MCF 10A (cell line): ENCODE measurements at regions of chr14 and their contacts with region 1.

Region 1: DNA sequence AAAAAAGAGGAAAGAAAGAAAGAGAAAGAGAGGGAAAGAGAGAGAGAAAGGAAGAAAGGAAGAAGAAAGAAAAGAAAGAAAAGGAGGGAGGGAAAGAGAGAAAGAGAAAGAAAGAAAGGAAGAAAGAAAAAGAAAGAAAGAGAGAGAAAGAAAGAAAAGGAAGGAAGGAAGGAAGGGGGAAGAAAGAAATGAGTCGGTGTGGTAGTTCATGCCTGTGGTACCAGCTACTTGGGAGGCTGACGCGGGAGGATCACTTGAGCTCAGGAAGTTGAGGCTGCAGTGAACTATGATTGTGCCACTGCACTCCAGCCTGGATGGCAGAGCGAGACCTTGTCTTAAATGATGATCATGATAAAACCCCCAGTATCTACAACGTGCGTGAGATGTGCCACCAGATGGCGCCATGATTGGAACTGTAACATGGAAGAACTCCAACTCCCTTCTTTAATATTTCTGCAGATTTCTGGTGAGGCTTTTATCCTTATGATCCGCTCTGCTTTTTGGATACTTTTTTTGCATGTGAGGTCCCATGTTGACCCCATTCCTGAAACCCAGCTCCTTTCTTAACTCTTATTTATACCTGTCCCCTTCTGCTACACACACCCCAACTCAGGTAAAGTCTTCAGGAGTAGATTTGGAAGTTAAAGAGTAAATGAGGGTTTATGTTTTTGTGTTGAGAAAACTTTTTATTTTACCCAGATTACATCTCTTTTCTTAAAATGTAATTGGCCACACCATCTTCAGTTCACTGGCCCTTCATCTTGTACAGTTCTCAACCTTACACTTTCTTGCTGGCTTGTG is 25.6 kb downstream of the RNASE10 start:
- DNase-seq: peak; percentile 80
- H3K4me3 Mint-ChIP-seq: no peak overlapping the region
- H3K27ac Mint-ChIP-seq: no peak overlapping the region
- H3K4me1 Mint-ChIP-seq: no peaks in the 10 kb centered on the region
- H3K27me3 Mint-ChIP-seq: peaks cover 28% of the 10 kb centered on the region
- CTCF ChIP-seq: peak; percentile 44

Region 2: DNA sequence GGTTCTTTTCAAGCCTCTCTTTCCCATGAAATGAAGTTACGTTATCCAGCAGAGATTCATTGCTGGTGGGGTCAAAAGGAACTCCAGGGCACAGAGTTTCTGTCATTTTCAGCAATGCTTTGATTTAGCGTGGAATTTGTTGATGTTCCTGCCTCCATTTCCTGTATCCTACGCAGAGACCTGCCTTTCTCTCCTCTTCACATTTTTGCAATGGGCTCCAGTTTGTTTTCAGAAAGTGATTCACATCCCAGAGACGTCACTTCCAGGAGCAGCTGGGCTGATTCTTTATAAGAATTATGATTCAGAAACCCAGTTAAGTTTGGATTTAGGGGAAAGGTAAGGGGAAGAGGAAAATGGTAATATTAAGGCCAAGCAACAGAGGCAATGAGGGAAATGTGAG is 14.1 kb before region 1 on chr14:
- CTCF ChIA-PET with region 1: interaction called, 21 read pairs
- POLR2A ChIA-PET with region 1: no interaction called
- intact Hi-C with region 1: no loop called
- DNase-seq: peak; percentile 31
- H3K4me3 Mint-ChIP-seq: no peak overlapping the region
- H3K27ac Mint-ChIP-seq: no peak overlapping the region
- H3K4me1 Mint-ChIP-seq: peaks cover 6% of the 10 kb centered on the region
- H3K27me3 Mint-ChIP-seq: no peaks in the 10 kb centered on the region
- CTCF ChIP-seq: no peak

Region 3: DNA sequence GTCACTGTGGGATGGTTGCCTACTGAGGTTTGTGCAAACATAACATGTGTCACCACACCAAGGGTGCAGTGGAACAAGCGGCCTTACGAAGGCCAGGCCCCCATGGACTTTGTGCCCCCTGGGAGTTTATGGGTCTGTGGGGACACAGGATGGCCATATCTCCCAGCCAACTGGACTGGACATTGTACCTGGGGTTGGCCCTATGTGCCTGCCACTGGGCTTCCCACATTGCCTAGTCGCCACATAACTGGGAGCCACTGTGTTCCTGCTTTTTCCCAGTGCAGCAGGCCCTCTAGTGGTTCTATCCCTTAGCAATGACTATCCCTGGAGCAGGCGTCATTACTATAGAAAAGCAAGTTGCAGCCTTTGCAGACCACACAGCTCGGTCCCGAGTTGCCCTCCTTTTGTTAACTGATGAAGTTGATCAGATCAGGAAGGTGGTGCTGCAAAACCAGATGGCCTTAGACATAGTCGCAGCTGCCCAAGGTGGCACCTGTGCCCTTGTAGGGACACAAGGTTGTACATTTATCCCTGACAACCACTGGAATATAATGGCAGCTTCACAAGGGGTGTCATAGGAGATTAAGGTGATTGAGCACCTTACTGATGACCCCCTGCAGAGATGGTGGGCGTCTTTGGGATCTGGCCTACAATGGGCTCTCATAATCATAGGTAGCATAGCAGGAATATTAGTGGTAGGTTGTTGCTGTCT is 75.4 kb after region 1 on chr14:
- CTCF ChIA-PET with region 1: interaction called, 23 read pairs
- POLR2A ChIA-PET with region 1: interaction called, 4 read pairs
- intact Hi-C with region 1: loop called (anchors 1 kb)
- DNase-seq: peak; percentile 60
- H3K4me3 Mint-ChIP-seq: no peak overlapping the region
- H3K27ac Mint-ChIP-seq: no peak overlapping the region
- H3K4me1 Mint-ChIP-seq: peaks cover 9% of the 10 kb centered on the region
- H3K27me3 Mint-ChIP-seq: no peaks in the 10 kb centered on the region
- CTCF ChIP-seq: peak; percentile 54

Region 4: GRCh38 chr14:20690848-20691523 is 160.0 kb after region 1 on chr14:
- CTCF ChIA-PET with region 1: interaction called, 10 read pairs
- POLR2A ChIA-PET with region 1: no interaction called
- intact Hi-C with region 1: loop called (anchors 1 kb)
- DNase-seq: peak; percentile 77
- H3K4me3 Mint-ChIP-seq: peak overlapping the region; percentile 47
- H3K27ac Mint-ChIP-seq: no peak overlapping the region
- H3K4me1 Mint-ChIP-seq: peaks cover 10% of the 10 kb centered on the region
- H3K27me3 Mint-ChIP-seq: no peaks in the 10 kb centered on the region
- CTCF ChIP-seq: peak; percentile 81

Region 5: GRCh38 chr14:20697273-20698017 is 166.5 kb after region 1 on chr14:
- CTCF ChIA-PET with region 1: interaction called, 10 read pairs
- POLR2A ChIA-PET with region 1: no interaction called
- intact Hi-C with region 1: no loop called
- DNase-seq: peak; percentile 78
- H3K4me3 Mint-ChIP-seq: no peak overlapping the region
- H3K27ac Mint-ChIP-seq: no peak overlapping the region
- H3K4me1 Mint-ChIP-seq: no peaks in the 10 kb centered on the region
- H3K27me3 Mint-ChIP-seq: no peaks in the 10 kb centered on the region
- CTCF ChIP-seq: peak; percentile 73